GM12878 (cell line): ENCODE measurements at regions of chr22 and their contacts with region 1.

Region 1: GRCh38 chr22:25110846-25111578 is 88.6 kb upstream of the CRYBB3 start:
- DNase-seq: peak; percentile 26
- ATAC-seq: peak; percentile 87
- H3K4me3 ChIP-seq: no peak overlapping the region
- H3K27ac ChIP-seq: no peak overlapping the region
- H3K4me1 ChIP-seq: no peaks in the 10 kb centered on the region
- H3K27me3 ChIP-seq: peaks cover 0 to 13% of the 10 kb centered on the region in 2 experiments; a peak in 3 of 4 replicates
- CTCF ChIP-seq: peak; percentile 40 to 64 (median 51)
- EP300 ChIP-seq: no peak
- POLR2A ChIP-seq: no peak
- RAD21 ChIP-seq: no peak

Region 2: GRCh38 chr22:25076336-25076735 is 34.7 kb before region 1 on chr22:
- CTCF ChIA-PET with region 1: interaction called, 12 read pairs
- POLR2A ChIA-PET with region 1: no interaction called
- RAD21 ChIA-PET with region 1: interaction called, 7 read pairs
- SMC1A ChIA-PET with region 1: interaction called, 15 read pairs
- in situ Hi-C with region 1: no loop called
- intact Hi-C with region 1: no loop called
- DNase-seq: no peak
- ATAC-seq: peak; percentile 55
- H3K4me3 ChIP-seq: no peak overlapping the region
- H3K27ac ChIP-seq: peak overlapping the region; percentile 28; the same call in 1 of the 2 replicates
- H3K4me1 ChIP-seq: peaks cover 40% of the 10 kb centered on the region
- H3K27me3 ChIP-seq: no peaks in the 10 kb centered on the region
- CTCF ChIP-seq: no peak
- EP300 ChIP-seq: no peak
- POLR2A ChIP-seq: no peak
- RAD21 ChIP-seq: no peak

Region 3: DNA sequence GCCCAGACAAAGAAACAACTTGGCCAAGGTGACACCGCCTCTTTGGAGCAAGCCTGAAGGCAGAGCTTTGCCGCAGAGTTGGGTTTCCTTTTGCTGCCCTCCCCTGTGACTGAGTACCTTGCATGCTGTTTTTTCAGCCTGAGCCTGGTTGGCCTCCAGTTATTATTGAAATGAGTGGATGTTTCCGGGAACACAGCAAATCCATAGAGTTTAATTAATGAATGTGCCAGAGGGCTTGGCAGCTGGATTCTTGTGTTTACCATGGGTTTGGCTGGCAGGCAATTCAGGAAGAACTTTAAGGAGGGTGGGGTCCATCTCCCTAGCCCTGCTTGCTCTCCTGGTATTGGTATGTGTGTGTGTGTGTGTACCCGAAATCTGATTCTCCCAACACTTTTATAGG is 23.0 kb after region 1 on chr22:
- CTCF ChIA-PET with region 1: interaction called, 21 read pairs
- POLR2A ChIA-PET with region 1: interaction called, 3 read pairs
- RAD21 ChIA-PET with region 1: interaction called, 5 read pairs
- SMC1A ChIA-PET with region 1: interaction called, 4 read pairs
- in situ Hi-C with region 1: no loop called
- intact Hi-C with region 1: no loop called
- DNase-seq: no peak
- ATAC-seq: no peak
- H3K4me3 ChIP-seq: no peak overlapping the region
- H3K27ac ChIP-seq: no peak overlapping the region
- H3K4me1 ChIP-seq: no peaks in the 10 kb centered on the region
- H3K27me3 ChIP-seq: no peaks in the 10 kb centered on the region
- CTCF ChIP-seq: no peak
- EP300 ChIP-seq: no peak
- POLR2A ChIP-seq: no peak
- RAD21 ChIP-seq: no peak

Region 4: GRCh38 chr22:25172153-25172552 is 61.1 kb after region 1 on chr22:
- CTCF ChIA-PET with region 1: interaction called, 30 read pairs
- POLR2A ChIA-PET with region 1: no interaction called
- RAD21 ChIA-PET with region 1: interaction called, 3 read pairs
- SMC1A ChIA-PET with region 1: interaction called, 6 read pairs
- in situ Hi-C with region 1: no loop called
- intact Hi-C with region 1: no loop called
- DNase-seq: no peak
- ATAC-seq: peak; percentile 91
- H3K4me3 ChIP-seq: no peak overlapping the region
- H3K27ac ChIP-seq: no peak overlapping the region
- H3K4me1 ChIP-seq: no peaks in the 10 kb centered on the region
- H3K27me3 ChIP-seq: no peaks in the 10 kb centered on the region; a peak in 1 of 4 replicates
- CTCF ChIP-seq: peak; percentile 47 to 76 (median 51)
- EP300 ChIP-seq: no peak
- POLR2A ChIP-seq: no peak
- RAD21 ChIP-seq: peak; percentile 32; the same call in 1 of the 2 replicates